ENCODE measurements at regions of chr2 and their contacts with region 1.

Region 1: GRCh38 chr2:121649596-121650314 is 493 bp upstream of the CLASP1 start:
- H3K4me3 Mint-ChIP-seq: peak overlapping the region; percentile 89
- H3K27ac Mint-ChIP-seq: peak overlapping the region; percentile 99
- H3K4me1 Mint-ChIP-seq: peaks cover 66% of the 10 kb centered on the region
- H3K27me3 Mint-ChIP-seq: no peaks in the 10 kb centered on the region

Region 2: GRCh38 chr2:121596221-121597080 is 53.3 kb before region 1 on chr2:
- intact Hi-C with region 1: loop called (anchors 1 kb)
- H3K4me3 Mint-ChIP-seq: peak overlapping the region; percentile 69
- H3K27ac Mint-ChIP-seq: peak overlapping the region; percentile 83
- H3K4me1 Mint-ChIP-seq: peaks cover 32% of the 10 kb centered on the region
- H3K27me3 Mint-ChIP-seq: no peaks in the 10 kb centered on the region

Region 3: DNA sequence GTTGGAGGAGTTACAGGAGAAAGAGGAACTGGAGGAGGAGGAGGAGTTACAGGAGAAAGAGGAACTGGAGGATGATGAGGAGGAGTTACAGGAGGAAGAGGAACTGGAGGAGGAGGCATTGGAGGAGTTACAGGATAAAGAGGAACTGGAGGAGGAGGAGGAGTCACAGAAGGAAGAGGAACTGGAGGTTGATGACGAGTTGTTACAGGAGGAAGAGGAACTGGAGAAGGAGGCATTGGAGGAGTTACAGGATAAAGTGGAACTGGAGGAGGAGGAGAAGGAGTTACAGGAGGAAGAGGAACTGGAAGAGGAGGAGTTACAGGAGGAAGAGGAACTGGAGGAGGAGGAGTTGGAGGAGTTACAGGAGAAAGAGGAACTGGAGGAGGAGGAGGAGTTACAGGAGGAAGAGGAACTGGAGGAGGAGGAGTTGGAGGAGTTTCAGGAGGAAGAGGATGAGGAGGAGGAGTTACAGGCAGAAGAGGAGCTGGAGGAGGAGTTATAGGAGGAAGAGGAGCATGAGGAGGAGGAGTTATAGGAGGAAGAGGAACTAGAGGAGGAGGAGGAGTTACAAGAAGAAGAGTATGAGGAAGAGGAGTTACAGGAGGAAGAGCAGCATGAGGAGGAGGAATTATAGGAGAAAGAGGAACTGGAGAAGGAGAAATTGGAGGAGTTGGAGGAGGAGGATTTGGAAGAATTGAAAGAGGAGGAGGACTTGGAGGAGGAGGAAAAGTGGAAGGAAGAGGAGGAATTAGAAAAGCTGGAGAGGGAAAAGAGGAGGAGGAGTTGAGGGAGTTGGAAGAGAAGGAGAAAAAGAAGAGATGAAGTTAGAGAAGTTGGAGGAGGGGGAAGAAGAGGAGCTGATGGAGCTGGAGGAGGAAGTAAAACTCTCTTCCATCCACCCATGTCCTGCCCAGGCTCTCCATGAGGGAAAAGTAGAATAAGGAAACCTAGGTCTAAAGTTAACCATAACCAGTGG is 37.7 kb before region 1 on chr2:
- intact Hi-C with region 1: loop called (anchors 5 kb)
- H3K4me3 Mint-ChIP-seq: no peak overlapping the region
- H3K27ac Mint-ChIP-seq: no peak overlapping the region
- H3K4me1 Mint-ChIP-seq: no peaks in the 10 kb centered on the region
- H3K27me3 Mint-ChIP-seq: no peaks in the 10 kb centered on the region

Region 4: DNA sequence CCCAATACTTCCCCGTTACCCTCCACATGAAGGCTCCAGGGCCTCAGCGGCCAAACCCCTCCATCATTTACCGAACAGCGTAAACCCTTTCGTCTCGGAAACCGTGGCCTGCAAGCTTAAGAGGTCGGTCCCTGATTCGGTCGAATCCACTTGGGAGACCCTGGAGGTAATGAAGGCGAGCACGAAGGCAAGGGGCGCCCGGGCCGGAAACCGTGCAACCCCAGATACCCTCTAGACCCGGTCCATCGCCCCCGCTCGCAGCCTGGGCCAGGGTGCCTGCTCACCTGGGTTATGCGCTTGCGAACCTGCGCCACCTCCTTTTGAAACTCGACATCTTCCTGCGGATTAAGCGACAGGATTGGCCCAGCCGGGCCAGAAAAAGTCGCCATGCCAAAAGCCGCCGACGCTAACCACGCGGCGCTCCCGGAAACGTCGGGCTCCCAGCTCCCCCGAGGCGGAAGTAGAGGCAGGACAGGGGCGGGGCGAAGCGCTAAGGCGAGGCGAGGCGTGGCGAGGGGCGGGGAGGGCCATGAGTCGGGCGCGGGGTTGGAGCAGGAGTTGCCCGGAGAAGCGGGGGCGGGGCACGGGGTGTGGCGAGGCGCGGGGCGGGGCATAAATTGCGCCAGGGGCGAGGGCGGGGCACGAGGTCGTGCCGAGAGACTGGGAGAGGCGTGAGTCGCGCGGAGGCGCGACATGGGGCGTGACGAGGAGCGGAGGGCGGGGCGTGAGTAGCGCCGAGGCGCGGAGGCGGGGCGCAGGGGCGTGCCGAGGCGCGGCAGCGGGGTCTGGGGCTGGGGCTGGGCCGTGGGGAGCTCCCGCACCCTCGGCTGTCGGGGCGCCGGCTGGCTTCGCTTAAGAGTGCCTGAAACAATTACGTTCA is 86.9 kb after region 1 on chr2 and contains the start of gene NIFK:
- intact Hi-C with region 1: loop called (anchors 1 kb)
- H3K4me3 Mint-ChIP-seq: peak within 1 kb of the TSS; percentile 98
- H3K27ac Mint-ChIP-seq: peak within 1 kb of the TSS; percentile 94
- H3K4me1 Mint-ChIP-seq: peaks cover 37% of the 10 kb centered on the region
- H3K27me3 Mint-ChIP-seq: no peaks in the 10 kb centered on the region

Region 5: DNA sequence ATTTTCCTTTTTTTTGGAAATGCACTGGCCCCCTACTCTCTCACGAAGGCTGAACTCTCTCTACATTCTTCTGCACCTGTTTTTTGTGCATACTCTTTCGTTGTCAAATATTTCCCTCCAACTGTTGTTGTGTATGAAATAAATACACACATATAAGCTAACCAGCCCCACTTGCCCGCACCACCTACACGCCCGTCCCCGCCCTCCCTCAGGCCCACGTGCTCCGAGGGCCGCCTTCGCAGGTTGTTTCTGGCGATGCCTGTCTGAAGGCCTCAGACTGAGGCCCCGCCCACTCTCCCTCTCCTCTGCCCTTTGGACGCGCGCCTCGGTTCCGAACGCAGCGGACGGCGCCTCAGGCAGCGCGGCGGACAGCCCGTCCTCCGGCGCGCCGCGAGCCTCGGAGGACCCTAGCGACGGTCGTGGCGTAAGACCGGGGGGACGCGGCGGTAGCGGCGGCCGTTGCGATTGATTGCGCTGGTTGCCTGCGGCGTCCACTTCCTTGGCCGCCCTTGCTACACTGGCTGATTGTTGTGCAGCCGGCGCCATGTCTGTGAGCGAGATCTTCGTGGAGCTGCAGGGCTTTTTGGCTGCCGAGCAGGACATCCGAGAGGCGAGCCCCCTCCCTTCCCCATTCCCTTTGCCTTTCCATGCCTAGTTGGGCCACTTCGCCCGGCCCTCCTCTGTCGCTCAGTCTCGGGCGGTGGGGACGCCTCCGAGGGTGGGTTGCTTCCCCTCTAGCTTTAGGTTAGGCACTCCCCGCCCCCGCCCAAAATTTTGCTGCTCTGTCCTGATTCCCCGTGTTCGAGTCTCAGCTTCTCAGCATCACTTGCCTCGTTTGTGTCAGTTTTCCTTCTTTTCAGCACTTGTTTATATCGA is 105.7 kb after region 1 on chr2 and contains the start of gene TSN:
- intact Hi-C with region 1: loop called (anchors 1 kb)
- H3K4me3 Mint-ChIP-seq: peak within 1 kb of the TSS; percentile 96
- H3K27ac Mint-ChIP-seq: peak within 1 kb of the TSS; percentile 95
- H3K4me1 Mint-ChIP-seq: peaks cover 33% of the 10 kb centered on the region
- H3K27me3 Mint-ChIP-seq: no peaks in the 10 kb centered on the region

Region 6: GRCh38 chr2:121804340-121804739 is 154.6 kb after region 1 on chr2:
- intact Hi-C with region 1: no loop called
- H3K4me3 Mint-ChIP-seq: no peak overlapping the region
- H3K27ac Mint-ChIP-seq: no peak overlapping the region
- H3K4me1 Mint-ChIP-seq: peaks cover 16% of the 10 kb centered on the region
- H3K27me3 Mint-ChIP-seq: no peaks in the 10 kb centered on the region

Measured in dendritic cell treated with granulocyte-macrophage colony-stimulating factor and Interleukin-4, amounts not matched to agents 40 ng/mL and 50 ng/mL, for 4 days (primary cell).